CD4-positive, alpha-beta T cell (primary cell): ENCODE measurements at regions of chr3 and their contacts with region 1.

Region 1: DNA sequence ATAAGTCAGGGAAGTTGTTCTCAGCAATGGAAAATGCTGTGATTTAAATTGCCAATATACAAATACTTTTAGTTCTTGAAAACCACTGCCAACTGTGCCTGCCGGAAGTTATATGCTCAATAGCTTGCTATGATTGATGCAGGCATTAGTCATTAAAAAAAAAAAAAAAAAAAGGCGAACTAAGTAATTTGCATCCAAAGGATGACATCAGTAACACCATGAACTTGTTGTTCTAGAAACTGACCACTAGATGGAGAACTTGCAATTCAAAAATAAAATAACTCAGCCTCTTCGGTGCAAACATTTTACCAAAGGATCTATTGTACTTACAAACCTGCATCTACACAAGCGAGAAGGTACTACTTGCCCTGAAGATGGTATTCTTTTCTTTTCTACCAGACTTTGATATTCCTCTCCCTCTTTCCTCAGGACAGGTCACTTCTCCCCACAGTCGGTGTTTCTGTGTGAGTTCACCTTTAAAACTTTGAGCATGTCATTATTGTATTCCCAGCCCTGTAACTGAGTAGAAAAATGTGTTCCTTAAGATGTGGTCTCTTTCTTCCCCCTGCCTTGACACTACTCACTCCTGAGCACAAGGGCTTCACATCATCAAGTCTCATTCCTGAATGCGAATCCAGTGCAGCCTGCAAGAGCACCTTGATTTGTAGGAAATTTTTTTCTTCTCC is 115.0 kb upstream of the VEPH1 start:
- DNase-seq: peak in 3 of 14 experiments; percentile 49 to 63 (median 53)
- ATAC-seq: peak; percentile 85
- H3K4me3 ChIP-seq: no peak overlapping the region
- H3K4me3 Mint-ChIP-seq: no peak overlapping the region
- H3K27ac ChIP-seq: no peak overlapping the region
- H3K27ac Mint-ChIP-seq: no peak overlapping the region
- H3K4me1 ChIP-seq: no peaks in the 10 kb centered on the region
- H3K4me1 Mint-ChIP-seq: peaks cover 6% of the 10 kb centered on the region
- H3K27me3 ChIP-seq: peaks cover 0 to 14% of the 10 kb centered on the region in 2 experiments
- H3K27me3 Mint-ChIP-seq: peaks cover 19% of the 10 kb centered on the region
- CTCF ChIP-seq: peak; percentile 80

Region 2: GRCh38 chr3:158532099-158532734 is 914.0 kb after region 1 on chr3:
- CTCF ChIA-PET with region 1: no interaction called
- POLR2A ChIA-PET with region 1: no interaction called
- intact Hi-C with region 1: loop called (anchors 1 to 2 kb)
- DNase-seq: peak in 4 of 14 experiments; percentile 3 to 38 (median 22)
- ATAC-seq: no peak
- H3K4me3 ChIP-seq: no peak overlapping the region
- H3K4me3 Mint-ChIP-seq: no peak overlapping the region
- H3K27ac ChIP-seq: no peak overlapping the region
- H3K27ac Mint-ChIP-seq: no peak overlapping the region
- H3K4me1 ChIP-seq: no peaks in the 10 kb centered on the region
- H3K4me1 Mint-ChIP-seq: no peaks in the 10 kb centered on the region
- H3K27me3 ChIP-seq: no peaks in the 10 kb centered on the region
- H3K27me3 Mint-ChIP-seq: no peaks in the 10 kb centered on the region
- CTCF ChIP-seq: no peak